ENCODE measurements at regions of chr7 and their contacts with region 1.

Region 1: GRCh38 chr7:66493235-66494181 is 135.2 kb upstream of the KCTD7 start:
- DNase-seq: peak; percentile 97
- H3K4me3 Mint-ChIP-seq: peak overlapping the region; percentile 85
- H3K27ac Mint-ChIP-seq: peak overlapping the region; percentile 93
- H3K4me1 Mint-ChIP-seq: peaks cover 15% of the 10 kb centered on the region
- H3K27me3 Mint-ChIP-seq: no peaks in the 10 kb centered on the region

Region 2: DNA sequence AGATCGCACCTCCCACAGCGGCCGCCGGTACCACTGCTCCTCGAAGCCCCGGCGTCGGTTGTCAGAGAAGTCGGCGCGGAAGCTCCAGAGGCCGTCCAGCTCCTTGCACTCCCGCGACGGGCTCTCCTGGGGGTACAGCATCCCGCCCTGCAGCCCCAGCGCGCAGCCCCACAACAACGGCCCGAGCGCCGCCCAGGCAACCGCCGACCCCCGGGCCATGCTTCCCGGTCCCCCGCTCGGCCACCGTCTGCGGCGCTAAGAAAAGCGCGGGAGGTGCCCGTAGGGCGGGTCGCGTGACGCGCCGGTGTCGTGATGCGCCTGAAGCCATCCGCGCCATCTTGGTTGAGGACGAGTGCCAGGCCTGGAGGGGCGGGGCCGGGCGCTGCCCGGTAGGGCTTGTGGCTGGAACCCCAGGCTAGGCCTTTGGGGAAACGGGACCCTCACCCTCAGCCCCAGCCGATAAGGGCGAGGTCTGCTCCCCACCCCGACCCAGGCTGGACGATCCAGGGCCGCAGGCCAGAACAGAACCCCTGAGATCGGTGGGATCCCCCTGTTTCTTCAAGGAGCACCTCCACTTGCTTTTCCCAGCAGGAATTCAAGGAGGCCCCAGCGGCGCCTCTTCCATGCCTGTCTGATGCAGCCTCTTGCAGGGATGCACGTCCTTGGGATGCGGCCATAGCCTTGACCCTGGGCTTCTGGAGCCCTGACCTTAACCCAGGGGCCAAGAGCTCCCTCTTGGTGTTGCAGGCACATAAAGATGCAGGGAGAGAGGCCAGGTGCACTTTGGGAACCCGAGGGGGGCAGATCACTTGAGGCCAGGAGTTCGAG is 511.3 kb before region 1 on chr7 and contains the start of gene GUSB:
- CTCF ChIA-PET with region 1: no interaction called
- POLR2A ChIA-PET with region 1: interaction called, 10 read pairs
- DNase-seq: peak; percentile 91
- H3K4me3 Mint-ChIP-seq: peak within 1 kb of the TSS; percentile 91
- H3K27ac Mint-ChIP-seq: peak within 1 kb of the TSS; percentile 96
- H3K4me1 Mint-ChIP-seq: peaks cover 19% of the 10 kb centered on the region
- H3K27me3 Mint-ChIP-seq: no peaks in the 10 kb centered on the region
- total RNA-seq, gene GUSB: 74.0 to 82.3 TPM

Region 3: DNA sequence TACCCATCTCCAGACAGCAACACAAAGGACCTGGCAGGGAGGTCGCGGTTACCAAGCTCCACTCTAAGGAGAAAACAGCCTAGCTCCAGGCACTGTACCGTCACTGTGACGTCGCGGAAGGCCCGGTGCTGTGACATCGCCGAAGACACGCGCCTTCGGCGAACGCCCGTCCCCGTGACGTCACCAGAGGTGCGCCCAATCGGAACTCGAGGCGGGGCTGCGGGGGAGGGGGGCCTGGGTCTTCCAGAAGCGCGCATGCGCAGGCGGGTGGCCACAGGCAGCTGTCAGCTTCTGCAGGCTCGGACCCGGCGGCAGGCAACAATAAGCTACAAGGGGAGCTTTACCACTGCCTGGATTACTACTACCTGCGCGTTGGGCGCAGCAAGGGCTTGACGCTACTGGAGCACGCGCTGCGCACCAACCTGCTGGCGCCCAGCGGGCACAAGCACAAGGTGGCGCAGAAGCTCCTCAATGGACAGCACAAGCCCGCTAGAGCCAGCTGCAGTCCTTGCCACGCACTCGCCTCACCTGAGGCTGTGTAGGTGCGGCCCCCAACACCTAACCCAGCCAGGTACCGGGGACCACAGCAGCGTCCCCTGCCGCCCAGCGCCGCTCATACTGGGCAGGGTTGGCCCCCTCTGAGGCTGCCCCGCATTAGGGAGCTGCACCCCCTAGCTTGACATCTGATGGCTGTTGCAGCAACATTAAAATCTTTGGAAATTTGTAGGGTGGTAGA is 80.0 kb before region 1 on chr7:
- CTCF ChIA-PET with region 1: interaction called, 8 read pairs
- POLR2A ChIA-PET with region 1: interaction called, 12 read pairs
- DNase-seq: peak; percentile 81
- H3K4me3 Mint-ChIP-seq: peak overlapping the region; percentile 60
- H3K27ac Mint-ChIP-seq: no peak overlapping the region
- H3K4me1 Mint-ChIP-seq: peaks cover 17% of the 10 kb centered on the region
- H3K27me3 Mint-ChIP-seq: peaks cover 2% of the 10 kb centered on the region

Region 4: GRCh38 chr7:66505531-66506451 is 12.3 kb after region 1 on chr7:
- CTCF ChIA-PET with region 1: interaction called, 5 read pairs
- POLR2A ChIA-PET with region 1: interaction called, 20 read pairs
- DNase-seq: peak; percentile 70
- H3K4me3 Mint-ChIP-seq: peak overlapping the region; percentile 46
- H3K27ac Mint-ChIP-seq: no peak overlapping the region
- H3K4me1 Mint-ChIP-seq: peaks cover 12% of the 10 kb centered on the region
- H3K27me3 Mint-ChIP-seq: peaks cover 21% of the 10 kb centered on the region

Region 5: GRCh38 chr7:66522518-66522917 is 29.0 kb after region 1 on chr7:
- CTCF ChIA-PET with region 1: no interaction called
- POLR2A ChIA-PET with region 1: no interaction called
- DNase-seq: peak; percentile 26
- H3K4me3 Mint-ChIP-seq: no peak overlapping the region
- H3K27ac Mint-ChIP-seq: no peak overlapping the region
- H3K4me1 Mint-ChIP-seq: no peaks in the 10 kb centered on the region
- H3K27me3 Mint-ChIP-seq: no peaks in the 10 kb centered on the region

Region 6: DNA sequence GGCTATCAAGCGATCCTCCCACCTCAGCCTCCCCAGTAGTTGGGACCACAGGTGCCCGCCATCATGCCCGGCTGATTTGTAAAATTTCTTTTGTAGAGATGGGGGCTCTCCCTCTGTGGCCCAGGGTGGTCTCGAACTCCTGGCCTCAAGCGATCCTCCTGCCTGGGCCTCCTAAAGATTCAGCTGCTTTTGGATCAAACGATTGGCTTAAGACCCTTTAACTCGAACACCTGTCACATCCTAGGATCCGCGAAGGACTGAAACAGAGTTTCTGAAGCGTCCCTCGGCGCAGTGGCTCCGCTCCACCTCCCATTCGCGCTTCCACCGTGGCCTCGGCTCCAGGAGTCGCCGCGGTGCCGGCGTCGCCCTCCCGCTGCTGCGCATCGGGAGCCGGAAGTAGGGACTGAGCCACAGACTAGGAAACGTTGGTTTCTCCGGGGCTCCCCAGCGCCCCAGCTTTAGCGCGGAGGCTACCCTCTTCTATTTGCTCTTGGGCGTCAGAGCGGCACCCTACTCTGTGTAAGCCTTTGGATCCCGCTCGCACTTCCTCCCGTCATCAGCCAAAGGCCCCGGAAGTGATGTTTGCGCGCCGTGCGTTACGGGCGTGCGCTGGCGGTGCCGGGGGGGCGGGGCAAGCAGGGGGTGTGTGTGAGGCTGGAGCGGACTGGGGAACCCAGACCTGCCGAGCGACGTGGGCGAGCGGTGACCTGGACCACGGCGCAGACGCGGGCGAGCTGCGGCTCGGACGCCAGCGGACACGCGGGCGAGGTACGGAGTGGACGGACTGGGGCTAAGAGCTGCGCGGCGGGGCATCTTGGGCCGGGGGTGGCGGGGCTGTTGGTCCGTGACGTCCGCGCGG is 188.2 kb after region 1 on chr7:
- CTCF ChIA-PET with region 1: no interaction called
- POLR2A ChIA-PET with region 1: interaction called, 11 read pairs
- DNase-seq: peak; percentile 94
- H3K4me3 Mint-ChIP-seq: peak overlapping the region; percentile 91
- H3K27ac Mint-ChIP-seq: peak overlapping the region; percentile 89
- H3K4me1 Mint-ChIP-seq: peaks cover 45% of the 10 kb centered on the region
- H3K27me3 Mint-ChIP-seq: no peaks in the 10 kb centered on the region

Region 7: DNA sequence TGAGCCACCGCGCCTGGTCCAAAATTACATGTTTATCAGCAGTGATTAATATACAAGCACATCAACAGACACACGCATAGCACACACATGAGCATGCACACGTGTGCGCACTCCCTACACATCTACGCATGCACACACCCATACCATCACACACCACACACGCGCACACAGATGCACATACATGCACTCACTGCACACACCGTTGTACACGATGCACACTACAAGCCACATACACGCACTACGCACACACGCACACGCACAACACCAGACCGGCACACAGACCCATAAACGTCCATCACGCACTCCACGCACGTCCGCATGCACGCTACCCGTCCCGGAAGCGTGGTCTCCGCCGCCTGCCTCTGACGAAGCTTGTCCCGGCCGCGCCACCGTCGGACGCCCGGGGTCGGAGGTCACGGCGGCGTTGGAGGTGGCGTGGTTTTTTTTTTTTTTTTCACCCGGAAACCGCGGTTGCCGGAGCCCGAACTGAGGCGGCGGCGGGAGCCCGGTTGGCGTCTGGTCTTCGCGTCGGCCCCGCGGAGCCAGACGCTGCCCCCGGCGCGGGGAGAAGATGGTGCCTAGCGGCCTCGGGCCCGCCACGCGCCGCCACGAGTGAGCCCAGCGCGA is 427.4 kb after region 1 on chr7 and contains the start of gene TMEM248:
- CTCF ChIA-PET with region 1: no interaction called
- POLR2A ChIA-PET with region 1: interaction called, 11 read pairs
- DNase-seq: peak; percentile 94
- H3K4me3 Mint-ChIP-seq: peak within 1 kb of the TSS; percentile 100
- H3K27ac Mint-ChIP-seq: peak within 1 kb of the TSS; percentile 97
- H3K4me1 Mint-ChIP-seq: peaks cover 40% of the 10 kb centered on the region
- H3K27me3 Mint-ChIP-seq: peaks cover 2% of the 10 kb centered on the region
- total RNA-seq, gene TMEM248: 88.3 to 91.6 TPM